CD8-positive, alpha-beta T cell (primary cell): ENCODE measurements at regions of chr2 and their contacts with region 1.

Region 1: GRCh38 chr2:62705007-62705829 is at the start of gene EHBP1:
- DNase-seq: peak; percentile 93 to 99 (median 97)
- ATAC-seq: peak; percentile 96
- H3K4me3 ChIP-seq: peak within 1 kb of the TSS; percentile 74 to 77
- H3K4me3 Mint-ChIP-seq: peak within 1 kb of the TSS; percentile 85
- H3K27ac ChIP-seq: peak within 1 kb of the TSS; percentile 36 to 65
- H3K27ac Mint-ChIP-seq: peak within 1 kb of the TSS; percentile 79
- H3K4me1 ChIP-seq: peaks cover 11% of the 10 kb centered on the region
- H3K4me1 Mint-ChIP-seq: peaks cover 41% of the 10 kb centered on the region
- H3K27me3 ChIP-seq: no peaks in the 10 kb centered on the region
- H3K27me3 Mint-ChIP-seq: no peaks in the 10 kb centered on the region
- CTCF ChIP-seq: no peak
- total RNA-seq, gene EHBP1: 16.2 to 16.7 TPM

Region 2: DNA sequence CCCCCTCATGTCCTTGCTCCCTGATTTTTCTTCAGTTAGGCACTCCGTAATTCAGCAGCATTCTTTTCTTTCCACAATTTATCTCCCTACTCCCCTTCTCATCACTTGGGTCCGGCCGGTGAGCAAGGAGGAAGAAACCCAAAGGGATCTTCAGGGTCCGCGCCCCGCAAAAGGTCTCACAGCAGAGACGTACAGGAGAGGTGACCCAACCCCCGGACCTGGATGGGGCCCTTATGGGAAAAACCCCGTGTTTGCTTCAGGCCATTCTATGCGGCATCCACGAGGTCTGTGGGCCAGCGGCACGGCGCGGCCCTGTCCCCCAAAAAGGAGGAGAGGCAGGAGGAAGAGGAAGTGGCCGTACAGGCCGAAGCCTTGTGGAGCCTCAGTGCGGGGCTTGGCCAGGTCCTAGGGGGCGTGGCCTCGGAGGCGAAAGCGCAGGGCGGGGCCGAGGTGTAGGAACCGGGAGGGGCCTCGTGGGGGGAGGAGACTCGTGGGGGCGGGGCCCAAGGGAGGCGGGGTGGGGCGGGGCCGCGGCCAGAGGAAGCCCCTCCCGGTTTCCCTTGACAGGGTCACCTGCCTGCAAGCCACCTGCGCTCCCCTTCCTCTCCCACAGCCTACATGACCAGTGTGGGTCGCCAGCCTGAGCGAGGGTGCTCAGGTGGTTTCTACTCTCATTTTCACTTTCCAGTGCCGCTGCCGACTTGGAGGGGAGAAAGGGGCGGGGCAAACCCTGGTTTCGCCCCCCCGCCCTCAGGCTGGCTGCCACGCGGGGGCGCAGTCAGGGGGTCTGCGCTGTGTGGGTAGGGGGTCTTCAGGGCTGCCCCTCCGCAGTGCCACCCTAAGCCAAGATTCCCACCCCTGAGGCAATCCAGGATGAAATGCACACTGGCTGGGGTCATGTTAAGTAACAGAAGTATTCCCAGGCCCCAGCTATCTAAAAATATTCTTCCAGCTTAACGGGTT is 1010.6 kb before region 1 on chr2:
- CTCF ChIA-PET with region 1: no interaction called
- POLR2A ChIA-PET with region 1: no interaction called
- intact Hi-C with region 1: loop called in 1 of 2 experiments (anchors 10 kb)
- DNase-seq: peak; percentile 65 to 89 (median 82)
- ATAC-seq: peak; percentile 95
- H3K4me3 ChIP-seq: peak overlapping the region; percentile 88 to 93
- H3K4me3 Mint-ChIP-seq: peak overlapping the region; percentile 90
- H3K27ac ChIP-seq: peak overlapping the region; percentile 43 to 63
- H3K27ac Mint-ChIP-seq: peak overlapping the region; percentile 87
- H3K4me1 ChIP-seq: peaks cover 14% of the 10 kb centered on the region
- H3K4me1 Mint-ChIP-seq: peaks cover 16% of the 10 kb centered on the region
- H3K27me3 ChIP-seq: no peaks in the 10 kb centered on the region
- H3K27me3 Mint-ChIP-seq: no peaks in the 10 kb centered on the region
- CTCF ChIP-seq: peak; percentile 52

Region 3: GRCh38 chr2:61854474-61855182 is 850.6 kb before region 1 on chr2:
- CTCF ChIA-PET with region 1: no interaction called
- POLR2A ChIA-PET with region 1: no interaction called
- intact Hi-C with region 1: loop called in 1 of 2 experiments (anchors 10 kb)
- DNase-seq: peak; percentile 80 to 98 (median 87)
- ATAC-seq: peak; percentile 89
- H3K4me3 ChIP-seq: peak overlapping the region; percentile 79 to 88
- H3K4me3 Mint-ChIP-seq: peak overlapping the region; percentile 97
- H3K27ac ChIP-seq: peak overlapping the region; percentile 64 to 81
- H3K27ac Mint-ChIP-seq: peak overlapping the region; percentile 96
- H3K4me1 ChIP-seq: peaks cover 12% of the 10 kb centered on the region
- H3K4me1 Mint-ChIP-seq: peaks cover 15% of the 10 kb centered on the region
- H3K27me3 ChIP-seq: no peaks in the 10 kb centered on the region
- H3K27me3 Mint-ChIP-seq: no peaks in the 10 kb centered on the region
- CTCF ChIP-seq: no peak

Region 4: GRCh38 chr2:61905372-61906185 is 799.6 kb before region 1 on chr2 and contains the start of gene COMMD1:
- CTCF ChIA-PET with region 1: no interaction called
- POLR2A ChIA-PET with region 1: no interaction called
- intact Hi-C with region 1: loop called (anchors 5 kb)
- DNase-seq: peak; percentile 58 to 89 (median 79)
- ATAC-seq: peak; percentile 99
- H3K4me3 ChIP-seq: peak within 1 kb of the TSS; percentile 63 to 79
- H3K4me3 Mint-ChIP-seq: peak within 1 kb of the TSS; percentile 97
- H3K27ac ChIP-seq: peak within 1 kb of the TSS; percentile 43 to 59
- H3K27ac Mint-ChIP-seq: peak within 1 kb of the TSS; percentile 90
- H3K4me1 ChIP-seq: peaks cover 16% of the 10 kb centered on the region
- H3K4me1 Mint-ChIP-seq: peaks cover 34% of the 10 kb centered on the region
- H3K27me3 ChIP-seq: no peaks in the 10 kb centered on the region
- H3K27me3 Mint-ChIP-seq: no peaks in the 10 kb centered on the region
- CTCF ChIP-seq: no peak
- total RNA-seq, gene COMMD1: 8.8 to 11.2 TPM

Region 5: DNA sequence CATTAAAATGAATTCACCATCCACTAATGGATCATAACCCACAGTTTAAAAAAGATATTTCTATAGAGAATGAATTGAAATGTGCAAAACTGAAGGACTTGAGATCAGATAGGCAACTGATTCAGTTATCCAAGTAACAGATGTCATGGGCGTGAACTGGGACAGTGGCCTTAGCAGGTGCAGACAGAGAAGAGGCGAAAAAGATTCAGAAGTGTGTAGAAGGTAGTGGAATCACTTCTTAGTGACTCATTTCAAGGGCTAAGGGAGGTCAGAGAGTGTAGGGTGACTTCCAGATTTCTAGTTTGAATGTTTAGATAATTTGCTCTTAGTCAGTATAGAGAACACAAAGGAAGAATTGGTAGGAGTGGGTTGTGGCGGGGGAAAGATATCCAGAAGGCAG is 80.0 kb after region 1 on chr2:
- CTCF ChIA-PET with region 1: no interaction called
- POLR2A ChIA-PET with region 1: no interaction called
- intact Hi-C with region 1: no loop called
- DNase-seq: no peak
- ATAC-seq: no peak
- H3K4me3 ChIP-seq: no peak overlapping the region
- H3K4me3 Mint-ChIP-seq: no peak overlapping the region
- H3K27ac ChIP-seq: no peak overlapping the region
- H3K27ac Mint-ChIP-seq: no peak overlapping the region
- H3K4me1 ChIP-seq: no peaks in the 10 kb centered on the region
- H3K4me1 Mint-ChIP-seq: peaks cover 4% of the 10 kb centered on the region
- H3K27me3 ChIP-seq: no peaks in the 10 kb centered on the region
- H3K27me3 Mint-ChIP-seq: no peaks in the 10 kb centered on the region
- CTCF ChIP-seq: no peak

Region 6: DNA sequence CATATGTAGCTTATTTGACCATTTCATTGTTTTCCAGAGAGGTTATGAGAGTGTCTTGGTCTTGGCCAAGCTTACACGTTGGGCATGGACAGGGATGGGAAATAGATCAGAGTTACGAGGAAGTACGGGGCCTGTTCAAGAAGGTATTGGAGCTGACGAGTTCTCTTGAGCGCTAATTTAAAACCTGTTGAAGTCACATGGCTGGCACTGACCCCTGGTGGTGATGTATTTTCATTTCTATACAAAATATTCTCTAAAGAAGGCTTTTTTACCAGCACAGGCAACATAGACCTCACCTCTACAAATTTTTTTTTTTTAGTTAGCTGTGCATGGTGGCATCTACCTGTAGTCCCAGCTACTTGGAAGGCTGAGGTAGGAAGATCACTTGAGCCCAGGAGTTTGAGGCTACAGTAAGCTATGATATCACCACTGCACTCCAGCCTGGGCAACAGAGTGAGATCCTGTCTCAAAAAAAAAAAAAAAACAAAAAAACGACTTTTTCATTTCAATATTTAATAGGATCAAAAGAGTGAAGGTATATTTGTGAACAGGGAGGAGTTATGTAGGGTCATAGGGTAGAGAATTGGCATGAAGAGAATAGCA is 1156.1 kb after region 1 on chr2:
- CTCF ChIA-PET with region 1: no interaction called
- POLR2A ChIA-PET with region 1: no interaction called
- intact Hi-C with region 1: loop called in 1 of 2 experiments (anchors 10 kb)
- DNase-seq: peak; percentile 29 to 83 (median 66)
- ATAC-seq: peak; percentile 61
- H3K4me3 ChIP-seq: no peak overlapping the region
- H3K4me3 Mint-ChIP-seq: no peak overlapping the region
- H3K27ac ChIP-seq: no peak overlapping the region
- H3K27ac Mint-ChIP-seq: peak overlapping the region; percentile 12
- H3K4me1 ChIP-seq: peaks cover 21% of the 10 kb centered on the region
- H3K4me1 Mint-ChIP-seq: peaks cover 32% of the 10 kb centered on the region
- H3K27me3 ChIP-seq: no peaks in the 10 kb centered on the region
- H3K27me3 Mint-ChIP-seq: no peaks in the 10 kb centered on the region
- CTCF ChIP-seq: peak; percentile 71